Ascending aorta (tissue), 2 donors: ENCODE measurements at regions of chr17 and their contacts with region 1.

Region 1: DNA sequence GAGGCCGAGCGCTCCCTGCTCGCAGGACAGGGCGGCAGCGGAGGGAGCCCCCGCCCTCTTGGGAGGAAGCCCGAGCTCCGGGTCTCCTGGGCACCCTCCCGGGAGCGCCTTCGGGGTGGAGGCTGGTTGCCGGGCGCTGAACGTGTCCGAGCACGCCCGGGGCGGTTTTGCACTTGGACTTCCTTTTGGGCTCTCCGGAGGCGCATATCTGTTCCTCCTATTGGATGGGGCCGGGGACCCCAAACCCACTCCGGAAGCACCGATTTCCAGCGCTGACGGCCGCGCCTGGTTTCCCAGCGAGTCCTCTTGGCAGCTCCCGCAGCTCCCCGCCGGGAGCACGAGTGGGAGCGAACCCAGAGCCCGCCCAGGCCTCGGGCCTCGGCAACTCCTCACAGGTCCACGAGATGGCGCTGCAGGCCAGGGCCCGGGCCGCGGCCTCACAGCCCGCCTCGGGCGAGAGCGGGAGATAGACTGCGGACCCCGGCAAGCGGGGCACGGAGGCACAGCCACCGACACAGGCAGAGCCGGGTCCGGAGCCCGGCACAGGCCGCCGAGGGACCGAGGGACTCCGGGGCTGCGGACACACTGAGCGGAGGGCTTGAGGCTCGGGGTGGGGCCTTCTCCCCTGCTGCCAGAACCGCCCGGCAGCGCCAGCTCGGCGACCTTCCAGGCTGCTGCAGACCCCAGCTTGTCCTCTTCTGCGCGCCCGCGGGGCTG is 12.7 kb downstream of the TBX2 start:
- DNase-seq: peak; percentile 35 to 91
- H3K4me3 ChIP-seq: peak overlapping the region; percentile 78 to 80
- H3K27ac ChIP-seq: peak overlapping the region; percentile 94 to 96
- H3K4me1 ChIP-seq: peaks cover 9 to 40% of the 10 kb centered on the region in 2 donors
- H3K27me3 ChIP-seq: no peaks in the 10 kb centered on the region
- CTCF ChIP-seq: peak; percentile 99 to 100 (median 99)

Region 2: DNA sequence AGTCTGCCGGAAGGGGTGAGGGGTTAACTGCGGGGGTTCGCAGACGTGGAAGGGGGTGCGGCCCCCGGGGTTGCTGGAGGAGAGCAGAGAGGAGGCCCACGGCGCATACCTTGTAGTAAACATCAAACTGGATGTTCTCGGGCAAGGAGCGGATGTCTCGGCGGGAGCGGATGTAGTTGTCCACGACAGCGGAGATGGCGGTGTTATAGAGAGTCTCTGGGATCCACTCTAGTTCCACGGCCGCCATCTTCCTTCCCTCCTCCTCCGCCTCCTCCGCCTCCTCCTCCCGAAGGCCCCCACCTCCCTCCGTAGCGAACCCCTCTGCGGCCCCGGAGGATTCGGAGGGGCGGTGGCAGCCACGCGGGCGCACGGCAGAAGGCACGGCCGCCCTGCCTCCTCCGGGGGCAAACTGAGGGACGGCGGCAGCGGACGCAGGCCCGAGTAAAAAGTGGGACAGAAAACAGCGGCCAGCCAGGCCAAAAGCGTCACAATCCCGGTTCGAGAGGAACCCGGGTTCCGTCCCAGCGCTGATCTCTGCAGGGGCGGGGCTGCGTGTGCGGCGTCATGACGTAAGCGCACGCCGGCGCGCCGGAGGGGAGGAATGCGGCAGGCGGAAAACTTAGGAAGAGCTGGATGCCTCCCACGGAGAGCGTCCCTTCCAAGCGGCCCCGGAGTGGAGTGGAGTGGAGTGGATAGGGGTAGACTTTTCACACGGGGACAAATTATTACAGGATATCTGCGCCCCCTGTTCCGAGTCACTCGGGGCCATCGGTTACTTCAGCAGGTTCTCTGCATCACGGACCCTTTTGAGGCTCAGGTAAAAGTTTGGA is 886.4 kb before region 1 on chr17 and contains the start of gene APPBP2:
- intact Hi-C with region 1: loop called (anchors 10 kb)
- DNase-seq: peak; percentile 27 to 90
- H3K4me3 ChIP-seq: peak within 1 kb of the TSS; percentile 96 to 97
- H3K27ac ChIP-seq: peak within 1 kb of the TSS; percentile 96 to 100
- H3K4me1 ChIP-seq: peaks cover 3 to 33% of the 10 kb centered on the region in 2 donors
- H3K27me3 ChIP-seq: no peaks in the 10 kb centered on the region
- CTCF ChIP-seq: no peak
- total RNA-seq, gene APPBP2: 8.6 TPM

Region 3: GRCh38 chr17:60677308-60678124 is 734.8 kb before region 1 on chr17 and contains the start of gene BCAS3:
- intact Hi-C with region 1: loop called (anchors 1 kb)
- DNase-seq: peak; percentile 98 to 99
- H3K4me3 ChIP-seq: peak within 1 kb of the TSS; percentile 71 to 79
- H3K27ac ChIP-seq: peak within 1 kb of the TSS; percentile 63 to 69
- H3K4me1 ChIP-seq: peaks cover 0 to 10% of the 10 kb centered on the region in 2 donors
- H3K27me3 ChIP-seq: no peaks in the 10 kb centered on the region
- CTCF ChIP-seq: no peak
- total RNA-seq, gene BCAS3: 75.9 TPM

Region 4: GRCh38 chr17:60901806-60902205 is 510.5 kb before region 1 on chr17:
- intact Hi-C with region 1: loop called (anchors 5 kb)
- DNase-seq: no peak
- H3K4me3 ChIP-seq: peak overlapping the region in 1 of 2 donors; percentile 26
- H3K27ac ChIP-seq: peak overlapping the region; percentile 71 to 86
- H3K4me1 ChIP-seq: peaks cover 0 to 10% of the 10 kb centered on the region in 2 donors
- H3K27me3 ChIP-seq: no peaks in the 10 kb centered on the region
- CTCF ChIP-seq: no peak

Region 5: GRCh38 chr17:61551255-61551742 is 139.0 kb after region 1 on chr17:
- intact Hi-C with region 1: loop called (anchors 1 kb)
- DNase-seq: no peak
- H3K4me3 ChIP-seq: no peak overlapping the region
- H3K27ac ChIP-seq: no peak overlapping the region
- H3K4me1 ChIP-seq: no peaks in the 10 kb centered on the region
- H3K27me3 ChIP-seq: no peaks in the 10 kb centered on the region
- CTCF ChIP-seq: peak; percentile 52 to 73 (median 59)

Region 6: DNA sequence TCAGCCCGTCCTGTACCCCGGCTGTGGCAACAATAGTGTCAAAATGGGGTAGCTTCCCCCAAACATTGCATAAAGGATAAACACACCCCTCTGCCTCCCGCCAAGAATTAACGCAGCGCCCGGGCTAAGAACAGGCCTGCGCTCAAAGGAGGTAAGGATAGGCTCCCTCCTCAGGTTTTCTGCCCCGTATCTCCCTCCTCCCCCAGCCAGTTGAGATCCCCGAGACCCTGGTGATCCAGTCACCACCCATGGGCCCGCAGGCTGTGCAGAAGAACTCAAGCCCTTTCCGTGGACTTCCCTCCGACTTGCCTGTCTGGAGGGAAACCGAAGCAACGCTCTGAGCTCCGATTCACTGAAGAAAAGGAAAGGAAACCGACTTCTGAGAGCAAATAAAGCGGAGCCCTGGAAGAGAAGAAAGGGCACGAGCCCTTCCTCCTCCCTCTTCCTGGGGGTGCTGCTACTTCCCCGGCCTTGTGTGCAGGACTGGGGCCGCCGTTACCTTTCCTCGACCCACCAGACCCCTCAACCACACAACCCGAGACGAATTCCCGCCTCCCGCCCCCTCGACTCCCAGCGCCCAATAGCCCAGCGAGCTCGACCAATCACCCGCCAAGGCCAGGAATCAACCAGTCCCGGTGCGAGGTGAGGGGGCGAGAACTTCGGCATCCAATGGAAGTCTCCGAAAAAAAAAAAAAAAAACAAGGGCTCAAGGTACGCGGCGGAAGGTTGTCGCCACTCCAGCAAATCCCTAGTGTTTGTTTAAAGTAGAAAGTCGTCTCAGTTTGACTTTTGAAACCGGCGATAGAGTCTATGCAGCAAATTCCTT is 450.9 kb after region 1 on chr17 and contains the start of gene BRIP1:
- intact Hi-C with region 1: loop called (anchors 2 kb)
- DNase-seq: peak; percentile 72 to 95
- H3K4me3 ChIP-seq: peak within 1 kb of the TSS; percentile 47 to 86
- H3K27ac ChIP-seq: peak within 1 kb of the TSS; percentile 72 to 82
- H3K4me1 ChIP-seq: no peaks in the 10 kb centered on the region
- H3K27me3 ChIP-seq: no peaks in the 10 kb centered on the region
- CTCF ChIP-seq: no peak
- total RNA-seq, gene BRIP1: not detected